ENCODE measurements at regions of chr1 and their contacts with region 1.

Region 1: GRCh38 chr1:182889997-182890396 is 50.9 kb downstream of the DHX9 start:
- DNase-seq: no peak
- H3K4me3 ChIP-seq: no peak overlapping the region
- H3K27ac ChIP-seq: no peak overlapping the region
- H3K4me1 ChIP-seq: peaks cover 2% of the 10 kb centered on the region
- H3K27me3 ChIP-seq: no peaks in the 10 kb centered on the region
- CTCF ChIP-seq: no peak
- POLR2A ChIP-seq: peak; percentile 5

Region 2: GRCh38 chr1:182851825-182852224 is 38.2 kb before region 1 on chr1:
- CTCF ChIA-PET with region 1: no interaction called
- POLR2A ChIA-PET with region 1: no interaction called
- dilution Hi-C with region 1: no loop called
- intact Hi-C with region 1: loop called (anchors 5 kb)
- DNase-seq: no peak
- H3K4me3 ChIP-seq: no peak overlapping the region
- H3K27ac ChIP-seq: no peak overlapping the region
- H3K4me1 ChIP-seq: no peaks in the 10 kb centered on the region
- H3K27me3 ChIP-seq: no peaks in the 10 kb centered on the region
- CTCF ChIP-seq: no peak
- POLR2A ChIP-seq: no peak

Region 3: GRCh38 chr1:182910143-182910542 is 20.1 kb after region 1 on chr1:
- CTCF ChIA-PET with region 1: no interaction called
- POLR2A ChIA-PET with region 1: no interaction called
- dilution Hi-C with region 1: no loop called
- intact Hi-C with region 1: no loop called
- DNase-seq: no peak
- H3K4me3 ChIP-seq: no peak overlapping the region
- H3K27ac ChIP-seq: no peak overlapping the region
- H3K4me1 ChIP-seq: no peaks in the 10 kb centered on the region
- H3K27me3 ChIP-seq: peaks cover 0 to 2% of the 10 kb centered on the region in 2 experiments
- CTCF ChIP-seq: no peak
- POLR2A ChIP-seq: no peak

Measured in endothelial cell of umbilical vein (primary cell).